ENCODE measurements at regions of chr16 and their contacts with region 1.

Region 1: GRCh38 chr16:11356573-11357331 is 11.5 kb downstream of the RMI2 start:
- DNase-seq: peak; percentile 81
- H3K4me3 ChIP-seq: no peak overlapping the region
- H3K27ac ChIP-seq: no peak overlapping the region
- H3K4me1 ChIP-seq: peaks cover 0 to 10% (median 5%) of the 10 kb centered on the region in 4 donors
- H3K27me3 ChIP-seq: no peaks in the 10 kb centered on the region
- CTCF ChIP-seq: peak; percentile 59 to 69 (median 61)
- EP300 ChIP-seq: no peak
- POLR2A ChIP-seq: no peak

Region 2: DNA sequence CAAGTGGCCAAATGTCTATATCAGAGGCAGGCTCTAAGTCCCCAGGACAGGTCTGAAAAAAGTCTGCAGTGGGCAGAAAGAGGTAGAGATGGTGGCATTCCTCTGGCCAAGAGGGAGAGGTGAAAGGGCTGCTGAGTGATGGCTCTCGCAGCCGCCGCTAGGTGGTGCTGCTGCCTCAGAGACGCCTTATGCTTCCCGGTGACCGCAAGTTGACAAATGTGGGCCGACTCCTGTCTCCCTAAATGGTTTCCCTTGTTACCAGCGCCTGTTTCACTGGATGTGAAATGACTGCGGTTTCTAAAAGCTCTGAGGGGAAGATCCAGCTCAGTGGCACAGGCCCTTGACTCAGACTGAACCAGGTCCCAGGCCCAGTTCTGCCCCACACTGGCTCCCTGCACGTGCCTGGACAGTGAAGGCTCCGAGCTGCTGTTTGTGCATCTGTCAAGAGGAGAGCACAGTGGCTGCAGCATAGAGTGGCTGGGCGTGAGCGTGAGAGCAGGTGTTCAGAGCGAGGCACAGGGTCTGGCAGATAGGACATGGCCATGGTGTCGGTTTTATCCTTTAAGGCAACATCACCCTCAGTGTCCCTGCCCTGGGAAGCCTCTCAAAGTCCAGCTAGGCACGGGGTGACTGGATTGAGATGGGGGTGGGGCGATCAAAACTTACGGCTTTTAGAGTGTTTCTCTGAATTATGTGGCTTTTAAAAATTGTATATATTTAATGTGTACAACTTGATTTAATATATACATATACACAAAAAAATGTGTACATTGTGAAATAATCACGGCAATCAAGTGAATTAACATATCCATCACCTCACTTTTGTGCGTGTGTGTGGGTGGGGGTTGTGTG is 392.5 kb before region 1 on chr16:
- in situ Hi-C with region 1: loop called (anchors 10 to 25 kb)
- intact Hi-C with region 1: no loop called
- DNase-seq: peak; percentile 86
- H3K4me3 ChIP-seq: no peak overlapping the region
- H3K27ac ChIP-seq: peak overlapping the region in 3 of 4 donors; percentile 8 to 56 (median 55)
- H3K4me1 ChIP-seq: peaks cover 0 to 11% (median 5%) of the 10 kb centered on the region in 4 donors
- H3K27me3 ChIP-seq: no peaks in the 10 kb centered on the region
- CTCF ChIP-seq: peak; percentile 90 to 96 (median 95)
- EP300 ChIP-seq: no peak
- POLR2A ChIP-seq: no peak

Region 3: GRCh38 chr16:10971560-10971961 is 385.2 kb before region 1 on chr16:
- in situ Hi-C with region 1: loop called (anchors 10 to 25 kb)
- intact Hi-C with region 1: loop called (anchors 10 kb)
- DNase-seq: peak; percentile 31
- H3K4me3 ChIP-seq: no peak overlapping the region
- H3K27ac ChIP-seq: no peak overlapping the region
- H3K4me1 ChIP-seq: peaks cover 0 to 4% (median 0%) of the 10 kb centered on the region in 4 donors
- H3K27me3 ChIP-seq: no peaks in the 10 kb centered on the region
- CTCF ChIP-seq: peak; percentile 76 to 89 (median 79)
- EP300 ChIP-seq: no peak
- POLR2A ChIP-seq: no peak

Region 4: GRCh38 chr16:11667824-11668622 is 311.3 kb after region 1 on chr16 and contains the start of gene SNN:
- in situ Hi-C with region 1: no loop called
- intact Hi-C with region 1: no loop called
- DNase-seq: peak; percentile 90
- H3K4me3 ChIP-seq: peak within 1 kb of the TSS; percentile 65 to 91 (median 78)
- H3K27ac ChIP-seq: peak within 1 kb of the TSS; percentile 73 to 83 (median 76)
- H3K4me1 ChIP-seq: peaks cover 8 to 44% (median 24%) of the 10 kb centered on the region in 4 donors
- H3K27me3 ChIP-seq: peaks cover 6% of the 10 kb centered on the region
- CTCF ChIP-seq: no peak
- EP300 ChIP-seq: no peak
- POLR2A ChIP-seq: no peak
- total RNA-seq, gene SNN: 4.9 to 12.3 (median 8.6) TPM

Measured in transverse colon (tissue), 4 donors.